ENCODE measurements at regions of chr14 and their contacts with region 1.

Region 1: DNA sequence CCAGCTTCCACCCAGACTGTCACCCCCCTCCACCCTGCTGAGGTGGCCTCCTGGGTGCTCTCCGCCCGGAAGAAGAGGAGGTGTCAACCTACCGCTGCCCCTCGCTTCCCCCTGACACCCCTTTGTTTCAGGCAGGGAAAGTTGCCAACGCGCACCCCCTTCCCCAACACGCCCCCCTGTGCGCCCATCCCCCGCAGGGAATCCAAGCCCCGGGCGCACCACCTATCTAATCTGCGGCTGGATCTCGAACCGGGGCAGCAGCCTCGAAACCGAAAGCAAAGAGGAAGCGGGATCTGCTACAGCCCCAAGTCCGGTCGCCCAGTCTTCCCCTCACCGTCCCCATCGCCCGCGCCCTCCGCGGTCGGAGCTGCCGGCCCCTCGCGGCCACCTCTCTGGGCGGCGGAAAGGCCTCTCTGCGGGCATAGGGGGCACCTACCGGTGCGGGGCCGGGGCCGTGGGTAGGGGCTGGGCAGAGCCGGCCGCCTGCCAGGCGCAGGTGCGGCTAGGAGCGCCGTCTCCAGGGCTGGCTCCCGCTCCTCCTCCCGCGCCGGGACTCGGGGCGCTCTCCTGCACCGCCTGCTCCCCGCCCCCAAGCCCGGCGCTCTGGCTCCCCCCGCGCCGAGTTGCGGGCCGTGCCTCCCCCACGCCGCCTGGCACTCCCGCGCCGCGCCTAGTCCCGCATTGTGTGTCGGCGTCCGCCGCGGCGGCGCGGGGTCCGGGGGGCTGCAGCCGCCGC is 18.3 kb upstream of the PLEKHH1 start:
- DNase-seq: peak in 6 of 10 donors; percentile 37 to 68 (median 56)
- H3K4me3 ChIP-seq: peak overlapping the region; percentile 56 to 98 (median 90)
- H3K27ac ChIP-seq: peak overlapping the region in 56 of 59 donors; percentile 12 to 93 (median 79)
- H3K27me3 ChIP-seq: no peaks in the 10 kb centered on the region
- CTCF ChIP-seq: peak in 3 of 56 donors; percentile 9 to 42 (median 24)

Region 2: GRCh38 chr14:67373347-67373746 is 141.5 kb before region 1 on chr14:
- intact Hi-C with region 1: no loop called
- DNase-seq: no peak
- H3K4me3 ChIP-seq: no peak overlapping the region
- H3K27ac ChIP-seq: no peak overlapping the region
- H3K27me3 ChIP-seq: no peaks in the 10 kb centered on the region
- CTCF ChIP-seq: no peak

Region 3: DNA sequence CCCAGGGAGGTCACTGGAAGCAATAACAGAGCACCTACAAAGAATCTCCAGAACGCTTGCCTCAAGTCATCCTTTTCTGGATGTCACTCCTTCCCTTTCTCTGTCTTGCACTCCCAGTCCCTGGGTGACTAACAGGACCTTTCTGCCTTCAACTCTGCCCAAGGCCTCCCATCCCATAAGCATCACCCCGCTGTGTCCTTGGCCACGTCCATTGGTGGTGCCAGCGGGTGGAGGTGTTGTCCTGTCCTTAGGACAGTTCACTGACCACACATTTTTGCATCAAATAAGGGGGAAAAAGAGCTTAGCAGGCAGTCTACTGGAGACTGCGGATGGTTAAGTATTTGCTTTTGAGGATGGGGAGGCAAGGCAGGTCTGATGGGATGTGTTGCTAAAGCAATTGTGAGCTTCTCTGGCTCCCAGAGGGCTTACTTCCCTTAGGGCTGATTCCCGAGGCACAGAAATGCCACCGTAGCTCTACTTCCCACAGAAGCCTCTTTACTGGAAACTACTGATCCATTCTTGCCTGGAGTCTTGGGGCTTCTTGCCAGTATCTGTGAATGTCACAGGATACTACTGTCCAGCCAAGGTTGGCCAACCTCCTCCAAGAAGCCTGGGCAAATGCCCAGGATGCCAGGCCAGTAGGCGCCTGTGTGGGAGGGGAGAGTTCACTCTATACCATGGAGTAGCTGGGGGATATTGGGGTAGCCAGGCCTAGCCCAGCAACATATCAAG is 79.0 kb before region 1 on chr14:
- intact Hi-C with region 1: loop called in 1 of 2 experiments (anchors 5 kb)
- DNase-seq: peak in 1 of 10 donors; percentile 25
- H3K4me3 ChIP-seq: no peak overlapping the region
- H3K27ac ChIP-seq: peak overlapping the region in 10 of 59 donors; percentile 2 to 61 (median 23)
- H3K27me3 ChIP-seq: no peaks in the 10 kb centered on the region
- CTCF ChIP-seq: no peak

Region 4: DNA sequence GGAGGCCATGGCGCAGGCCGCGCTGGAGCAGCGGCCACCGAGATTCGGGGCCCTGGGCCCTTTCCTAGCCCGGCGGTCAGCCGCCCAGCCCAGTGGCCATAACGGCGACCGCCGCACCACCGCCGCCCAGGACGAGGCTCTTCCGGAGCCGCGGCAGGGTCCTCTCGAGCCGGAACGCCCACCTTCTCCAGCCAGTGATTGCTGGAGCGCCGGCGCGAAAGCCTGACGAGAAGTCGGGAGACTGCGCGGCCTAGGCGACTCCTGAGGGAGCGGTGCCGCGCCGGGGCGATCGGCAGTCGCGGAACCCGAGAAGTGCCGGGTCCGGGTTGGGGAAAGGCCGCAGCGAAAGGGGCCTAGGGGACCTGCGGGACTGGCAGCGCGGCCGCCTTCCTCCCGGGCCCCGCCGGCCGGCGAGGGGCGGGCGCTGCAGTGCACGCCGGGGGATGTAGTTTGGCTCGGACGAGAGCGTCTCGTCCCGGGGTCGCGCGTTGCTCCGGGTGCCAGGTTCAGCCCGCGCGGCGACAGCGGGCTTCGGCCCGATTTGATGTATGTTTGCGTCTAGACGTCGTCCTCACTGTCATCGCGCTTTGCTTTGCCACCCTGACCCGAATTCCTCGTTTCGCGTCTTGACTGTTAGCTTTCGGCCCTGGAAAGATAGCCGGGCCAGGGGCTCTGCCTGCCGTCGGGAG is 159.8 kb after region 1 on chr14 and contains the start of gene VTI1B:
- intact Hi-C with region 1: loop called in 1 of 2 experiments (anchors 10 kb)
- DNase-seq: peak; percentile 57 to 87 (median 76)
- H3K4me3 ChIP-seq: peak within 1 kb of the TSS; percentile 78 to 100 (median 94)
- H3K27ac ChIP-seq: peak within 1 kb of the TSS; percentile 93 to 100 (median 99)
- H3K27me3 ChIP-seq: no peaks in the 10 kb centered on the region
- CTCF ChIP-seq: peak in 30 of 56 donors; percentile 1 to 51 (median 19)
- total RNA-seq, gene VTI1B: 101 to 177 (median 140) TPM